ENCODE measurements at regions of chr5 and their contacts with region 1.

Region 1: DNA sequence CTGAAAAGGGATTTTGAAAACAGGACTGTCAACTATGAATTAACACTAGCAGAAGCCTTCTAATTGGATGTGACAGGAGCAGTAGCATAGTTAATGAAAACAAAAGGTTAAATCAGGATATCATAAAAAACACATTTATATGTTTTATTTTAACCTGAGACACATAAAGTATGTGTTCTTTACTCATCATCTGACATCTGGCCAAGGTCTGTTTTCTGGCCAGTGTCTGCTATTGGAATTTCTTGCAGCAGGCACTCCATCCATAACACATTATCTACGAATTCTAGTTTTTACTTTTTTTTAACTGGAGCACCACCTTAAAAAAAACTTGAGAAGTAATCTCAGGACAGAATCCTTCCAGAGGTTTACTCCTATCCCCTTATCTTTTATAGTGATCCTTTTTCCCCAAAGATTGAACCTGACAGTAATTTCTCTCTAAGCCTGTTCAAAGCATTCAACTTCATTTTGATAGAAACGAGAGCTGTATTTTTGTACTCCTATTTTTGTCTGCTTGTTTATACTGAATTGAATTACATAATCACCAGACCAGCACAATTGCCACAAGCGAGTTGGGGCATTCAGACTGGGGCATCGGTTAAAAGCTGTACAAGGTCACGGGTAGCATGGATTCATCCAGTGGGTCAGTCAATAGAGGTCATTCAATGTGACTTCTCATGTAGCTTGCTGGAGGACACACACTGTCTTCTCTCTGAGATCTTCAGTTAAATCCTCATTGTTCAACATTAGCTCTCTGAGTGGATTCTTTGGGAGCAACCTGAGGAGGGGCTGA is 205.6 kb upstream of the CLINT1 start:
- DNase-seq: no peak
- ATAC-seq: no peak
- H3K4me3 ChIP-seq: no peak overlapping the region
- H3K27ac ChIP-seq: no peak overlapping the region
- H3K4me1 ChIP-seq: no peaks in the 10 kb centered on the region
- H3K27me3 ChIP-seq: no peaks in the 10 kb centered on the region
- CTCF ChIP-seq: no peak
- POLR2A ChIP-seq: no peak
- RAD21 ChIP-seq: no peak

Region 2: GRCh38 chr5:158026304-158027031 is 38.1 kb before region 1 on chr5:
- CTCF ChIA-PET with region 1: no interaction called
- POLR2A ChIA-PET with region 1: no interaction called
- dilution Hi-C with region 1: no loop called
- in situ Hi-C with region 1: no loop called
- intact Hi-C with region 1: no loop called
- DNase-seq: no peak
- ATAC-seq: no peak
- H3K4me3 ChIP-seq: no peak overlapping the region
- H3K27ac ChIP-seq: no peak overlapping the region
- H3K4me1 ChIP-seq: no peaks in the 10 kb centered on the region
- H3K27me3 ChIP-seq: no peaks in the 10 kb centered on the region; the same call in 1 of the 2 replicates
- CTCF ChIP-seq: no peak
- POLR2A ChIP-seq: no peak
- RAD21 ChIP-seq: no peak

Region 3: GRCh38 chr5:158074992-158075769 is 10.7 kb after region 1 on chr5:
- CTCF ChIA-PET with region 1: interaction called, 32 read pairs
- POLR2A ChIA-PET with region 1: no interaction called
- dilution Hi-C with region 1: no loop called
- in situ Hi-C with region 1: no loop called
- intact Hi-C with region 1: no loop called
- DNase-seq: peak; percentile 61
- ATAC-seq: peak; percentile 98
- H3K4me3 ChIP-seq: peak overlapping the region; percentile 20; the same call in 1 of the 2 replicates
- H3K27ac ChIP-seq: no peak overlapping the region
- H3K4me1 ChIP-seq: no peaks in the 10 kb centered on the region
- H3K27me3 ChIP-seq: no peaks in the 10 kb centered on the region
- CTCF ChIP-seq: peak; percentile 75
- POLR2A ChIP-seq: no peak
- RAD21 ChIP-seq: peak; percentile 59

Measured in IMR-90 (cell line).